HepG2 (cell line): ENCODE measurements at regions of chr2 and their contacts with region 1.

Region 1: GRCh38 chr2:235106874-235107639 is 155.2 kb downstream of the SH3BP4 start:
- DNase-seq: peak; percentile 79
- ATAC-seq: peak; percentile 88
- H3K4me3 ChIP-seq: no peak overlapping the region
- H3K27ac ChIP-seq: no peak overlapping the region
- H3K4me1 ChIP-seq: peaks cover 30% of the 10 kb centered on the region
- H3K27me3 ChIP-seq: peaks cover 7 to 39% of the 10 kb centered on the region in 2 experiments
- CTCF ChIP-seq: peak; percentile 95
- EP300 ChIP-seq: no peak
- POLR2A ChIP-seq: no peak
- RAD21 ChIP-seq: peak; percentile 88

Region 2: DNA sequence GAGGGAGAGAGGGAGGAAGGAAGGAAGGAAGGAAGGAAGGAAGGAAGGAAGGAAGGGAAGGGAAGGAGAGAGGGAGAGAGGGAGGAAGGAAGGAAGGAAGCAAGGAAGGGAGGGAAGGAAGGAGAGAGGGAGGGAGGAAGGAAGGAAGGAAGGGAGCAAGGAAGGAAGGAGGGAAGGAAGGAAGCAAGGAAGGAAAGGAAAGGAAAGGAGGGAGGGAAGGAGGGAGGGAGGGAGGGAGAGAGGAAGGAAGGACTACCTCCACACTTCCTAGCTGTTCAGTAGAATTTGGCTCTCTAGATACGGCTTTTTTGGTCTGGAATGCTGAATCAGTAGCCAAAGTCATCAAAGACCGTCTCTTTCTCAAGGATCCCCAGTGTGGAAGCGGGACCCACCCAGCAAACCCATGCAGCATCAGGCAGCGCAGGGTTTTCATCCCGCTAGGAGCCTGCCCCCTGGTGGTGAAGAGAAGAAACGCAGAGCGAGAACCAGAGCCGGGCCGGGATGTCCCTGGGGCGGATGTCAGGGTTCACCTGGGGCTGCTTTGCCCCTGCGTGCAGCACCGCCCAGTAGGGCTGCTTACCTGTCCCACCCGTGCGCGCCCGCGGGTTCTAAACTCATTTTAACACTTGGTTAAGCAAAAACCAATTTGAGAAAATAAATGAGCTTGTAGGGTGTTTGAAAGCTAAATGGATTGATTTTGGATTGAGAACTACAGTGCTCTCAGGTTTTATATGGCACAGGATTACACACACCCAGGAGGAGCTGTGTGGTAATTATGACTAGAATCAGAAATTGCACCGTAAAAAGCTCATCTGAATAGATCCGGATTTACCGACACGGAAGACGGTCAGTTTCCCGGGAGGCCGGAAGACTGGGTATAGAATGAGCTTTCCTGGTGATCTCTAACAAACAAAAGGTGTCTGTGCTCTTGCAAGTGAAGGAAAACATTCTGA is 562.1 kb before region 1 on chr2:
- CTCF ChIA-PET with region 1: interaction called, 20 read pairs
- POLR2A ChIA-PET with region 1: interaction called, 3 read pairs
- in situ Hi-C with region 1: loop called (anchors 5 kb)
- intact Hi-C with region 1: loop called (anchors 1 kb)
- DNase-seq: peak; percentile 44
- ATAC-seq: peak; percentile 91
- H3K4me3 ChIP-seq: no peak overlapping the region; a peak in 1 of 6 replicates
- H3K27ac ChIP-seq: no peak overlapping the region
- H3K4me1 ChIP-seq: peaks cover 19% of the 10 kb centered on the region
- H3K27me3 ChIP-seq: peaks cover 4 to 54% of the 10 kb centered on the region in 2 experiments; a peak in 4 of 5 replicates
- CTCF ChIP-seq: peak; percentile 95
- EP300 ChIP-seq: no peak
- POLR2A ChIP-seq: no peak
- RAD21 ChIP-seq: peak; percentile 76

Region 3: GRCh38 chr2:234550511-234551107 is 556.4 kb before region 1 on chr2:
- CTCF ChIA-PET with region 1: interaction called, 20 read pairs
- POLR2A ChIA-PET with region 1: interaction called, 3 read pairs
- in situ Hi-C with region 1: loop called (anchors 5 kb)
- intact Hi-C with region 1: loop called (anchors 1 kb)
- DNase-seq: peak; percentile 73
- ATAC-seq: peak; percentile 88
- H3K4me3 ChIP-seq: no peak overlapping the region
- H3K27ac ChIP-seq: no peak overlapping the region
- H3K4me1 ChIP-seq: peaks cover 33% of the 10 kb centered on the region
- H3K27me3 ChIP-seq: peaks cover 2 to 33% of the 10 kb centered on the region in 2 experiments; a peak in 4 of 5 replicates
- CTCF ChIP-seq: peak; percentile 99
- EP300 ChIP-seq: no peak
- POLR2A ChIP-seq: no peak
- RAD21 ChIP-seq: peak; percentile 97

Region 4: GRCh38 chr2:235005603-235006259 is 101.3 kb before region 1 on chr2:
- CTCF ChIA-PET with region 1: no interaction called
- POLR2A ChIA-PET with region 1: no interaction called
- in situ Hi-C with region 1: no loop called
- intact Hi-C with region 1: loop called (anchors 2 kb)
- DNase-seq: peak; percentile 98
- ATAC-seq: peak; percentile 88
- H3K4me3 ChIP-seq: peak overlapping the region in 1 of 3 experiments; percentile 29; a peak in 2 of 6 replicates
- H3K27ac ChIP-seq: peak overlapping the region; percentile 70
- H3K4me1 ChIP-seq: peaks cover 84% of the 10 kb centered on the region
- H3K27me3 ChIP-seq: no peaks in the 10 kb centered on the region
- CTCF ChIP-seq: peak; percentile 83
- EP300 ChIP-seq: peak; percentile 70 to 88; a peak in 3 of 4 replicates
- POLR2A ChIP-seq: no peak
- RAD21 ChIP-seq: peak; percentile 83